ENCODE measurements at regions of chr12 and their contacts with region 1.

Region 1: DNA sequence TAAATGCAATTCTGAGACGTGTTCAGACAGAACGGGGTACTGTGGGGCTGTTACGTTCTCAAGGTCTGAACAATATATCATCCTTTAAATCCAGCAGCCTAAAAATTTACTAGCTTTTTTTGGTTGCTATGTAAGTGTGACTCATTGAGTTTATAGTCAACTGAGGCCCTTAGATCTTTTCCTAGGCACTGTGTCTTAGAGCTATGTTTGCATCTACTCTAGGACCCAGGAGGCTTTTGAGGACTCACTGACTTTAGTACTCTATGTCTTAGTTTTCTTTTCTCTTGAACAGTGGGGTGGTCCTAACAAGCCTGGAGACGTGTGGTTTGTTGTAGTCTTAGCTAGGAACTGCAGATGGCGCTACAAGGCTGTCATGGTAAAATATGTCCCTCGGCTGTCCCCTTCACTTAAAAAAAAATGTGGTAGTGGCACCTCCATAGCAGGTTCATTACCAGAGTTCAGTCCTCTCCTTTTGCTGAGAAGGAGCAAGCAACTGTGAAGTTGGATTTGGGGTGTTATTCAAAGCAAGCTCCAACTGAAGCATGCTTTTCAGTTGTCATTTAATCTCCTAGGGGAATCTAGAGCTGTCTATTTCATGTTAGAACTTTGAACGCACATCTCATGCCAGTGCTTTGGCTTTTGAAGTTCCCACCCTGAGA is 8.7 kb upstream of the SPATS2 start:
- DNase-seq: no peak
- ATAC-seq: peak; percentile 95
- H3K4me3 ChIP-seq: no peak overlapping the region
- H3K27ac ChIP-seq: no peak overlapping the region
- H3K4me1 ChIP-seq: peaks cover 5% of the 10 kb centered on the region
- H3K27me3 ChIP-seq: no peaks in the 10 kb centered on the region
- CTCF ChIP-seq: peak; percentile 89

Region 2: GRCh38 chr12:49331380-49332222 is 27.0 kb before region 1 on chr12:
- CTCF ChIA-PET with region 1: interaction called, 45 read pairs
- POLR2A ChIA-PET with region 1: interaction called, 6 read pairs
- in situ Hi-C with region 1: no loop called
- intact Hi-C with region 1: no loop called
- DNase-seq: no peak
- ATAC-seq: peak; percentile 83
- H3K4me3 ChIP-seq: no peak overlapping the region
- H3K27ac ChIP-seq: no peak overlapping the region
- H3K4me1 ChIP-seq: peaks cover 6% of the 10 kb centered on the region; the same call in 1 of the 2 replicates
- H3K27me3 ChIP-seq: no peaks in the 10 kb centered on the region
- CTCF ChIP-seq: peak; percentile 90

Region 3: DNA sequence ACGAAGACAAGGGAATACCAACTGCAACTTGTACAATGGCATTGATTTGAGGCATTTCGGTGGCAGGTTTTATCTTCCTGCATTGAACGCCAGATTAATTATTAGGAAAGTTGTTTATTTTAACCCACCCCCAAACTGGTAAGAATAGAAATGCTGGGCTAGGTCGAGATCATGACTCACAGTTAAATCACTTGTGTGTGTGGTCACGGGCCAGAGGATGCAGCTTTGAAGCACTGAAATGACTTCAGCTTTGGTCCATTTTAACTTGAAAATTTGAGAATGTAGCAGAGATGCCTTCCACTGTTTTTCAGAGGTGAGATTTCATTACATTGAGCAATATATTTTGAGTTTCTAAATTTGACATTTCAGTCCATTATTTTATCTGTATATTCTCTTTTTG is 156.7 kb after region 1 on chr12:
- CTCF ChIA-PET with region 1: interaction called, 92 read pairs
- POLR2A ChIA-PET with region 1: interaction called, 7 read pairs
- in situ Hi-C with region 1: loop called (anchors 25 kb)
- intact Hi-C with region 1: loop called (anchors 1 kb)
- DNase-seq: peak; percentile 17
- ATAC-seq: no peak
- H3K4me3 ChIP-seq: no peak overlapping the region
- H3K27ac ChIP-seq: no peak overlapping the region
- H3K4me1 ChIP-seq: no peaks in the 10 kb centered on the region
- H3K27me3 ChIP-seq: no peaks in the 10 kb centered on the region
- CTCF ChIP-seq: no peak

Region 4: GRCh38 chr12:49553512-49554088 is 195.0 kb after region 1 on chr12:
- CTCF ChIA-PET with region 1: interaction called, 19 read pairs
- POLR2A ChIA-PET with region 1: interaction called, 3 read pairs
- in situ Hi-C with region 1: no loop called
- intact Hi-C with region 1: no loop called
- DNase-seq: peak; percentile 47
- ATAC-seq: peak; percentile 75
- H3K4me3 ChIP-seq: no peak overlapping the region
- H3K27ac ChIP-seq: no peak overlapping the region
- H3K4me1 ChIP-seq: no peaks in the 10 kb centered on the region
- H3K27me3 ChIP-seq: no peaks in the 10 kb centered on the region
- CTCF ChIP-seq: peak; percentile 79

Measured in Panc1 (cell line).